Left cardiac atrium (tissue), 4 donors: ENCODE measurements at regions of chr16 and their contacts with region 1.

Region 1: DNA sequence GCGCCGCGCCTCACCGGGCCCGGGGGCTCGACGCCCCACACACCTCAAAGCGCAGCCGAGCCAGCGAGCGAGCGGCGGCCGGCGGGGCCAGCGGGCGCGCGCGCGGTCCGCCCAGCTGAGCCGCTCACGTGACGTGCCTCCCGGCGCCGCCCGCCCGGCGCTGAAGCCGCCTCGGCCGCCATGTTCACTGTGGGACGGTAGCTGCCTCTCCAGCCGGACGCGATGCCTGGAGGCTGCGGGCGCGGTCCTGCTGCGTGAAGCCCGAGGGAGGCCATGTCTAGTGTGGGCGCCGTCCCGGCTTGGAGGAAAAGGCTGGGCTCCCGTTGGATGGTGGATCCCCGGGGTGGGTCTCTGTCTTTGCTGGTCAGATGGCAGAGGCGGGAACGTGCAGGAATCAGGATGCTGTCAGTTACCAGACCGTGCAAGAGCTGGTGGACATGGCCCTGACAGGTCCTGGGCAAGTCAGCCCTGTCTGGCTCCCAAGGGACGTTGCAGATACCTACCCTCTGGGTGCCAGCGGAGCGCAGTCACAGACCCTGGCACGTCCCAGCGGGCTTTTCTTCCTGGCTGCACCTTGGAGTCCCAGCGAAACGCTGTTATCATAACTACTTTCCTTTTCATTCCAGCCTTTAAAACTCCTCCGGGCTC is at the start of gene USP31:
- DNase-seq: peak; percentile 97
- ATAC-seq: peak; percentile 98 to 99
- total RNA-seq, gene USP31: 24.0 to 31.1 TPM

Region 2: GRCh38 chr16:23072084-23072599 is 77.3 kb before region 1 on chr16:
- intact Hi-C with region 1: loop called (anchors 5 kb)
- DNase-seq: peak; percentile 91
- ATAC-seq: peak; percentile 75 to 88

Region 3: DNA sequence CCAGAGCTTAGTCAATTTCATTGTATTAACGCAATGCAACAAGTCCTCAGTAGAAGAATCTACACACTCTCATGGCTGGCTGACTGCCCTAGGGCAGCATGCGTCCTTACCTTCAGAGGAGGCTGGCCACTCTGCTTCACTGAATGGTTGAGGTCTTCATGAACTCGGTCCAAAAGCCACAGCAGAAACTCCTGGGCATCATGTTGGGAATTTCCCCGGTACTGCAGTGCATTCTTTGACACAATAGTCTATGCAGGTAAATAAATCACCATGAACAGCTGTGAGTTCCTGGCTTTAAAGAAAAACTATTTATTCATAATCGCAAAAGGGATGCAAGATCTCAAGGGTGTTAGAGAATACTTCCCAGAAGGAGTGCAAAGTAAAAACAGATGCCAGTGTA is 41.5 kb before region 1 on chr16:
- intact Hi-C with region 1: loop called in 1 of 2 experiments (anchors 5 kb)
- DNase-seq: no peak
- ATAC-seq: peak in 1 of 2 donors; percentile 29

Region 4: GRCh38 chr16:23207493-23207892 is 58.0 kb after region 1 on chr16:
- intact Hi-C with region 1: no loop called
- DNase-seq: no peak
- ATAC-seq: no peak

Region 5: GRCh38 chr16:24010440-24011089 is 861.1 kb after region 1 on chr16:
- intact Hi-C with region 1: no loop called
- DNase-seq: peak; percentile 84
- ATAC-seq: peak; percentile 70 to 76